ENCODE measurements at regions of chr16 and their contacts with region 1.

Region 1: GRCh38 chr16:70770626-70771552 is 30.1 kb downstream of the VAC14 start:
- DNase-seq: peak; percentile 74
- CTCF ChIP-seq: peak; percentile 91

Region 2: DNA sequence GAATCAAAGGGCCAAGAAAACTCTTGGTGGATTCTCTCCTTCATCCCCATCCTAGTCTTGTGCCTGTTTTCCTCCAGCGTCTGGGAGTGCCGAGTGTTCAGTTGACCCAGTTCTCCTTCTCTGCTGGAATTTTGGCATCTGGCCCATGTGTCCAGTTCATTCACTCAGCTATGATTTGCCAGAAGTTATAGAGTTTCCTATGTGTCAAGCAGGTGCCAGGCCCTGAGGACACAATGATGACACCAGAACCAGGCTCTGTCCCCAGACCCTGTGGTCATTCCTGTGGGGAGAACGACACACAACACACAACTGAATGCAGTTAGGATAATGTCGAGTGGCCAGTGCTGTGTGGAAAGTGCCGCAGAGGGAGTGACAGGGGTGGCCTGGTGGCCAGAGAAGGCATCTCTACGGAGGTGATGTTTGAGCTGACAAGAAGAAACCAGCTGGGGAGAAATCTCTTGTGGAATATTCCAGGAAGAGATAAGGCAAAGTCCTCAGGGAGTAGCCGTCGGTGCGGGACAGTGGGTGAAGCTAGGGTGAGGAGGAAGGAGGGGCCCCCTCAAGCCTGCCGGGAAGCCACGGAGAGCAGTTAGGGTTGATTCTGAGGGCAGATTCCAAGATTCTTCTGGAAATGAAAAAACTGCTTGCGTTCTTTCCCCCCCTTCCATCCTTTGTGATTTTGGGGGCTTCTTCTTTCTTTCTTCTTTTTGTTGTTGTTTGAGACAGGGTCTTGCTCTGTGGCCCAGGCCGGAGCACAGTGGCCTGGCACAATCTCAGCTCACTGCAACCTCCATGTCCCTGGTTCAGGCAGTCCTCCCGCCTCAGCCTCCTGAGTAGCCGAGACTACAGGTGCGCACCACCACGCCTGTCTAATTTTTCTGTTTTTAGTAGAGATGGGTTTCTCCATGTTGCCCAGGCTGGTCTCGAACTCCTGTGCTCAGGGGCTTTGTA is 160.3 kb before region 1 on chr16:
- CTCF ChIA-PET with region 1: no interaction called
- POLR2A ChIA-PET with region 1: no interaction called
- DNase-seq: no peak
- CTCF ChIP-seq: no peak

Region 3: GRCh38 chr16:70646260-70647241 is 124.3 kb before region 1 on chr16 and contains the start of gene IL34:
- CTCF ChIA-PET with region 1: no interaction called
- POLR2A ChIA-PET with region 1: no interaction called
- DNase-seq: no peak
- CTCF ChIP-seq: no peak

Region 4: GRCh38 chr16:70679666-70680494 is 91.0 kb before region 1 on chr16:
- CTCF ChIA-PET with region 1: interaction called, 120 read pairs
- POLR2A ChIA-PET with region 1: no interaction called
- DNase-seq: no peak
- CTCF ChIP-seq: peak; percentile 36

Region 5: GRCh38 chr16:70737377-70738082 is 33.4 kb before region 1 on chr16:
- CTCF ChIA-PET with region 1: interaction called, 15 read pairs
- POLR2A ChIA-PET with region 1: interaction called, 7 read pairs
- DNase-seq: peak; percentile 87
- CTCF ChIP-seq: no peak

Region 6: DNA sequence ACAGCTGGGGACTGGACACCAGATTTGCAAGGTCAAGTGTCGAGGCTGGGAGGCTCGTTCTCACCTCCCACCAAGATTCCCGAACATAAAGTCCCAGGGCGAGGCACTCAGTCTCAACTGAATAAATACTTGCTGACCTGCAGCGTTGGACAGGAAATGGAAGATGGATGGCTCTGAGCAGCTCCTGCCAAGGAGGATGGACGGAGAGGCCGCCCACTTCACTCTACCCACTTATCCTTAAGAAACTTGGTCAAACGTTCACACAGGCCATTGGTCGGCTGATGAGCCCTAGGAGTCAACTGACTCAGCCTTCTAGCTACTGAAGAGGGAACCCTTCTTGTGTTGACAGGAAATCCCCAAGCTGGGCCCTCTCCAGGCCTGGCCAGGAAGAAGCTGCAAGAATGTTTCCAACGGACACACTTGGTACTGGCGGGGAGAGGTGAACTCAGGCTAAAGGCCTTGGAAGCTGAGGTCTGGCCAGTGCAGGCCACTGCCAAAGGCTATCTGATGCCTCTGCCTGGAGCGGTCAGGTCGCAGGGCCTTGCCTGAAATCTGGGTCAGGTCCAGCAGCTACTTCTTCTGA is 19.9 kb before region 1 on chr16:
- CTCF ChIA-PET with region 1: interaction called, 30 read pairs
- POLR2A ChIA-PET with region 1: no interaction called
- DNase-seq: no peak
- CTCF ChIP-seq: no peak

Region 7: GRCh38 chr16:70759666-70760065 is 11.2 kb before region 1 on chr16:
- CTCF ChIA-PET with region 1: interaction called, 66 read pairs
- POLR2A ChIA-PET with region 1: no interaction called
- DNase-seq: no peak
- CTCF ChIP-seq: no peak

Region 8: DNA sequence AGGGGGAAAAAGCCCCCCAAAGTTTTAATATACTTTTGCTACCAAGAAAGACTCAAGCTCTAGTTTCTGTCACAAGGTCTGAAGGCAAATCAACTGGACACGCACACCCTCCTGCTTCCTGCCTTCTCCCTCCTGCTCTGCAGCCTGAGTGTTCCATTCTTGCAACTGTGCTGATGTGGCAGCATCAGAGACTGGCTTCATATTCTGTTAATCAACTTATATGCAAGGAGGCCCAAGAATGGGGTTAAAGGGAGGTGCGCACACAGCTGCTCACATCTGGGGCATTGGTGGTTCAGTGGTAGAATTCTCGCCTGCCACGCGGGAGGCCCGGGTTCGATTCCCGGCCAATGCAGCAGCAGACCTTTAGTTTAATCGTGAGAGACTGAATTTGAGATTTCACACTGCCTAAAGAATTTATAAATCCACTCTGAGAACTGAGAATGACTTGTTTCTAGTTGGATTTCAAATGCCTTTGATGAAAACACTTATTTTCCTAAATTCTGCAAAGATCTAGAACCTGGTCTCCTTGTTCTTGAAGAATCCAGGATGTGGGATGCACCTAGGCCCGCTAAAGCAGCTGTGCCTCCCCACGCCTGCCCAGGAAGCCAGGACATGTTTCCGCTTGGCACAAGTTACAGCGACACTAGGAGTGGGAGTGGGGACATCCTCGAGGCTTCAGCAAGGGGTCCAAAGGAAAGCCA is 18.5 kb after region 1 on chr16:
- CTCF ChIA-PET with region 1: interaction called, 46 read pairs
- POLR2A ChIA-PET with region 1: no interaction called
- DNase-seq: no peak
- CTCF ChIP-seq: no peak